Breast epithelium (tissue), 4 donors: ENCODE measurements at regions of chr4 and their contacts with region 1.

Region 1: DNA sequence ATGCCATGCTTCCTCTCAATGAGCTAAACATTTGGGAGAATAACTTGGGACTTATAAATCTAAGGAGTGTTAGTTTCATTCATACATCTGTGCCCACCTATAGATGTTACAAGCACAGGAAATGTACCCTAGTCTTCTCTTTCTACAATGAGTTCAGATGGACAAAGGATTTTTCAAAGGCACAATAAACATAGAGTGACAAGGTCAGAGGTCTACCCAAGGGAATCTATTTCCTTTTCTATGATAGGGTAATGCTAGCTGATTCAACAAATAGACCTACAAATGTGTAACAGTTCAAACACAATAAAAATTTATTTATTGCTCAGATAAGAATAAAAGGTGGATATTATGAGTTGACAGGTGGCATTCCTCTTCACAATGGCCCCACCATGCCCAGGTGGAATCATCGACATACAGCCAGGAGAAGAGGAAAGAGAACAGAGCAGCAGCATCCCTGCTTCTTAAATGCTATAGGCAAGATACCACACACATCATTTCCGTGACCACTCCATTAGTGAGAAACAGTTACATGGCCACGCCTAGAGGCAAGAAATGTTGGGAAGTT is 421.8 kb downstream of the HNRNPD start:
- DNase-seq: no peak
- H3K4me3 ChIP-seq: no peak overlapping the region
- H3K27ac ChIP-seq: no peak overlapping the region
- H3K4me1 ChIP-seq: no peaks in the 10 kb centered on the region
- H3K27me3 ChIP-seq: no peaks in the 10 kb centered on the region
- CTCF ChIP-seq: no peak
- POLR2A ChIP-seq: no peak

Region 2: GRCh38 chr4:81919238-81919637 is 32.7 kb before region 1 on chr4:
- intact Hi-C with region 1: no loop called
- DNase-seq: no peak
- H3K4me3 ChIP-seq: no peak overlapping the region
- H3K27ac ChIP-seq: no peak overlapping the region
- H3K4me1 ChIP-seq: no peaks in the 10 kb centered on the region
- H3K27me3 ChIP-seq: no peaks in the 10 kb centered on the region
- CTCF ChIP-seq: no peak
- POLR2A ChIP-seq: no peak

Region 3: DNA sequence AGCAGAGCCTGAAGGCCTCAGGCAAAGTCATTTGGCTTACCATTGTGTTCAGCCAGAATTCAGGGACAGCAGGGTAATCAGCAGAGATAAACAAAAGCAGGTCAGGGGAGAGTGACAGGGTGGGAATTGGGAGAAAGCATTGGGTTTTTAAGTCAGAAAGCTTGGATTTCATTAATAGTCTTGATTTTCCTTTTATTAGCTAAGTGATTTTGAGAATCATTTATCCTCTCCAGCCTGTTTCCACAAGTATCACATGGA is 11.7 kb after region 1 on chr4:
- intact Hi-C with region 1: no loop called
- DNase-seq: no peak
- H3K4me3 ChIP-seq: no peak overlapping the region
- H3K27ac ChIP-seq: no peak overlapping the region
- H3K4me1 ChIP-seq: no peaks in the 10 kb centered on the region
- H3K27me3 ChIP-seq: no peaks in the 10 kb centered on the region
- CTCF ChIP-seq: no peak
- POLR2A ChIP-seq: no peak

Region 4: GRCh38 chr4:81974523-81974922 is 22.6 kb after region 1 on chr4:
- intact Hi-C with region 1: no loop called
- DNase-seq: no peak
- H3K4me3 ChIP-seq: no peak overlapping the region
- H3K27ac ChIP-seq: no peak overlapping the region
- H3K4me1 ChIP-seq: no peaks in the 10 kb centered on the region
- H3K27me3 ChIP-seq: no peaks in the 10 kb centered on the region
- CTCF ChIP-seq: no peak
- POLR2A ChIP-seq: no peak

Region 5: DNA sequence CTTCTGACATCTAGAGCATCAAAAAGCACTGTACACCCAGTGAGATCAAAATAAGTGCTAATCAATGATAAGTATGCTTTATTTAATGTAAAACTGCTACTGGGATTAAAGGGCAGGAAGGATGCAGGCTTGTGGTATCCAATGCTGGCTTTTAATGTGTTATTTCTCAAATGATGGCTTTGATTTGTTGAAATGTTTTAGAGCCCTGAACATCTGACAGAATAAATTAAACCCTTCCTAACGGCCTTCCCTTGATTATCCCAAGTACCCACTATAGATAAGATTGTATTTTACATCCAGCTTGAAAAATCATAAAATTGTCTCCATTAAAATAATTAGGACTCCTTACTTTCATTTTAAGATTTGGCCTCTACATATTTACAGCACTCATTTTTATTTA is 38.9 kb after region 1 on chr4:
- intact Hi-C with region 1: loop called (anchors 2 kb)
- DNase-seq: no peak
- H3K4me3 ChIP-seq: no peak overlapping the region
- H3K27ac ChIP-seq: no peak overlapping the region
- H3K4me1 ChIP-seq: no peaks in the 10 kb centered on the region
- H3K27me3 ChIP-seq: no peaks in the 10 kb centered on the region
- CTCF ChIP-seq: no peak
- POLR2A ChIP-seq: no peak

Region 6: DNA sequence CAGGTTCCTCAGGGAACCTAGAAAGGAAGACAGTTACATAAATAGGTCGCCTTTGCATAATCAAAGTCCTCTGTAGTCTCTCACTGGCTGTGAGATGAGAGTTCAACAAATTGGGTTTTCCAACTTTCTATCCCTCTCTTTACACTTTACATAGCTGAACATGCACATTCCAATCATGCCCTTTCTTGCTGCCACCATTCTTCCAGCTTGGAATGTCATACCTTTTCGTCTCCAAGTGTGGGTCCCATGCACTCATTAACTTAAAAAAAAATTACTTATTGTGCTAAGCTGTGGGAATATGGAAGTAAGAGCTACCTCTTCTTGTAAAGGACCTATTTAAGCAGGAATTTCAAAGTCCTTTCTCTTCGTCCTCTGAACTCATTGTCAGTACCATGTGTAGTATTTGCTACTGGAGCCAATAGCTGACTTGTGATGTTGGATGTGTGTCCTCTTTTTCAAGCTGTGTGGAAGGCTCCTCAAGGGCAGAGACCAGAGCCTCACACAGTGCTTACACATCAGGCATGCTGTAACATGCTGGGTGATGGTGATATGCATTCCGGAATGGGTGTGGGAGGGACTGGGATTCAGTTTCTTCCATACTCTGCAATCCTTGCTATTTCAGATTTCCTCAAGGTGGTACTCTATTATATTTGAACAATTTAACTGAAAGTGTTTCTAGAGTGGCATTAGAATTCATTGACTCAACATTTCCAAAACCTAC is 485.5 kb after region 1 on chr4:
- intact Hi-C with region 1: no loop called
- DNase-seq: peak in 1 of 2 donors; percentile 44
- H3K4me3 ChIP-seq: no peak overlapping the region
- H3K27ac ChIP-seq: peak overlapping the region in 1 of 2 donors; percentile 35
- H3K4me1 ChIP-seq: no peaks in the 10 kb centered on the region
- H3K27me3 ChIP-seq: no peaks in the 10 kb centered on the region
- CTCF ChIP-seq: no peak
- POLR2A ChIP-seq: no peak